ENCODE measurements at regions of chr16 and their contacts with region 1.

Region 1: DNA sequence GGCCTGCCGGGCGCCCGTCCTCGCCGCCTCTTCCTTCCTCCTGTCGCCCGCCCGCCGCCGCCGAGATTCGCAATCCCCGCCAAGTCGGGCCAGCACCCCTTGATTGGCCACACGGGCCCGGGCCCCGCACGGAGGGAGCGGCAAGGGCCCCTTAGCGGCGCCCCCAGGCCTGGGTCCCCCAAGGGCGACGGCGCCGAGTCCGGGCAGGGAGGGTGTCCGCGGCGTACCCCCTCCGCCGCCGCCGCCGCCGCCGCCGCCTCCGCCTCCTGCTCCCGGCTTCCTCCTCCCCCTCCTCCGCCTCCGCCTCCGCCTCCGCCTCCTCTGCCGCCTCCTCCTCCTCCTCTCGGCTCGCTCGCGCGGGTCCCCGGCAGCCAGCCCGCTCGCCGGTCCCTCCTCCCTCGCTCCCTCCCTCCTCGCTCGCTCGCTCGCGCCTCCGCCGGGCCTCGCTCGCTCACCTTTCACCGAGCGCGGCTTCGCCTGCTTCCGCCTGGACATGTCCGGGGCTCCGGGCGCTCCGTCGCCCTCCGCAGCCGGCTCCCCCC is 561 bp downstream of the ZNF423 start:
- DNase-seq: peak in 1 of 2 donors; percentile 89
- H3K4me3 ChIP-seq: peak overlapping the region; percentile 74 to 81
- H3K27ac ChIP-seq: peak overlapping the region; percentile 87 to 92
- H3K4me1 ChIP-seq: peaks cover 0 to 14% of the 10 kb centered on the region in 2 donors
- H3K27me3 ChIP-seq: no peaks in the 10 kb centered on the region
- CTCF ChIP-seq: no peak

Region 2: DNA sequence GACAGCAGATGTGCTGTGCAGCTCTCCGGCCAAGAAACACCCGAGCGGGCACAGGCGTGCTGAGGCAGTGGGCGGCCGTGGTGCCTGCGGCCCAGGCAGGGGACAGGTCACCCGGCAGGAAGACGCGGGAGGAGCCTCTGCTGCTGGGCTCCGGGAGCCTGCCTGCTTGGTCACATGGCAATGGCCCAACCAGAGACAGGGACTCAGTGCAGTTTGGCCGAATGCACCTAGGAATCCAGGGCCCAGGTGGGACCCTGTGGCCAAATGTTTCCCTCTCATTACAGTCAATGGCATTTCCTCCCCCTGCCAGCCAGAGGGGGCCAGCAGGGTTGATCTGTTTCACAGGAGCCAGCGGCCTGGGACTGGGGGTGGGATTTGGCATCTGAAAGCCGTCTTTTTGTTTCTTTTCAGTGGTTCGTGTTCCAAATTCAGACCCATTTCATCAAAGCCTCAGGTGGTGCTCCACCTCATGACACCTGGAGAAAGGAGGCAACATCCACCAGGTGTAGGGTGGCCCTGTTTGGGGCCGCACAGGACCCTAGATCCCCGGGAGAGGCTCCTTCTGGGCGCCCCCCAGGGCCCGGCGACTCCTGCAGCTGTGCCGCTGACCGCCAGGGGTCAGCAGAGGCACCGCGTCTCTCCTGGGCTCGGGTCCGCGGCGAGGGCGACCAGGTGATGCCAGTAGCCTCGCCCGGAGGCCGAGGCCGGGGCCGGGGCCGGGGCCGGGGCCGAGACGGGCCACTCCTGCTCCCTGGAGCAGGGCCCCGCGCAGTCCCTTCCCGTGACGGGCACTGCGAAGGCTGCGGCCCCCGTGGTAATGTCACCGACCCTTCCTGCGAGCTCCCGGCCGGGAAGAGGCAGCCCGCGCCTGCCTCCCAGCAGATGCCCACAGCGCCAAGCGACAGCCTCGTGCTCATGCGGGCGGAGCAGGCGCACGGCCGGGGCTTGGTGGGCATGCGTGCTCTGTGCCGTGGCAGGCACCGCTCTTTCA is 363.3 kb before region 1 on chr16:
- intact Hi-C with region 1: loop called (anchors 5 kb)
- DNase-seq: peak in 1 of 2 donors; percentile 65
- H3K4me3 ChIP-seq: peak overlapping the region; percentile 42 to 62
- H3K27ac ChIP-seq: no peak overlapping the region
- H3K4me1 ChIP-seq: peaks cover 4% of the 10 kb centered on the region in 2 donors
- H3K27me3 ChIP-seq: no peaks in the 10 kb centered on the region
- CTCF ChIP-seq: peak; percentile 82 to 96 (median 95)

Region 3: DNA sequence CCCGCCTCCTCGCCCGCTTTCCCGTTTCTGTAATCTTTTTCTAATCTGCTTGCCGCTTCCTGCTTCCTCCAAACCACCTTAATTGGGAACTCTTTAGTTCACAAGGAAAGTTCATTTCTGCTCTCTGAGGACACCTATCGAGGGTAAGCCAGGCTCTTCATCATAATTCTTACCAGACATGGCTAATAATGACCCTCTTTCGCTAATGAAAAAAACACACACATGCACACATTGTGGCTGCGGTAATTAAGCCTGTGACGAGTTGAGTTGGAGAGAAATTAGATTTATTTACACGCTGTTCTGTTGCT is 100.1 kb before region 1 on chr16:
- intact Hi-C with region 1: loop called (anchors 2 kb)
- DNase-seq: no peak
- H3K4me3 ChIP-seq: peak overlapping the region; percentile 38 to 66
- H3K27ac ChIP-seq: no peak overlapping the region
- H3K4me1 ChIP-seq: peaks cover 0 to 5% of the 10 kb centered on the region in 2 donors
- H3K27me3 ChIP-seq: no peaks in the 10 kb centered on the region
- CTCF ChIP-seq: peak; percentile 12 to 66 (median 45)

Region 4: GRCh38 chr16:49827805-49828438 is 27.4 kb before region 1 on chr16:
- intact Hi-C with region 1: loop called (anchors 1 kb)
- DNase-seq: peak in 1 of 2 donors; percentile 85
- H3K4me3 ChIP-seq: peak overlapping the region in 1 of 2 donors; percentile 23
- H3K27ac ChIP-seq: peak overlapping the region; percentile 80 to 83
- H3K4me1 ChIP-seq: peaks cover 16 to 39% of the 10 kb centered on the region in 2 donors
- H3K27me3 ChIP-seq: no peaks in the 10 kb centered on the region
- CTCF ChIP-seq: no peak

Region 5: GRCh38 chr16:50024684-50025536 is 169.6 kb after region 1 on chr16 and contains the start of gene CNEP1R1:
- intact Hi-C with region 1: loop called (anchors 5 kb)
- DNase-seq: peak; percentile 81 to 97
- H3K4me3 ChIP-seq: peak within 1 kb of the TSS; percentile 85 to 92
- H3K27ac ChIP-seq: peak within 1 kb of the TSS; percentile 71 to 86
- H3K4me1 ChIP-seq: peaks cover 2 to 7% of the 10 kb centered on the region in 2 donors
- H3K27me3 ChIP-seq: no peaks in the 10 kb centered on the region
- CTCF ChIP-seq: peak; percentile 99 to 100 (median 100)
- total RNA-seq, gene CNEP1R1: 5.9 TPM

Region 6: GRCh38 chr16:50806099-50807062 is 951.0 kb after region 1 on chr16:
- intact Hi-C with region 1: loop called (anchors 10 kb)
- DNase-seq: peak; percentile 49 to 94
- H3K4me3 ChIP-seq: peak overlapping the region; percentile 34 to 52
- H3K27ac ChIP-seq: peak overlapping the region; percentile 5 to 61
- H3K4me1 ChIP-seq: peaks cover 0 to 4% of the 10 kb centered on the region in 2 donors
- H3K27me3 ChIP-seq: no peaks in the 10 kb centered on the region
- CTCF ChIP-seq: peak; percentile 80 to 94 (median 86)

Region 7: DNA sequence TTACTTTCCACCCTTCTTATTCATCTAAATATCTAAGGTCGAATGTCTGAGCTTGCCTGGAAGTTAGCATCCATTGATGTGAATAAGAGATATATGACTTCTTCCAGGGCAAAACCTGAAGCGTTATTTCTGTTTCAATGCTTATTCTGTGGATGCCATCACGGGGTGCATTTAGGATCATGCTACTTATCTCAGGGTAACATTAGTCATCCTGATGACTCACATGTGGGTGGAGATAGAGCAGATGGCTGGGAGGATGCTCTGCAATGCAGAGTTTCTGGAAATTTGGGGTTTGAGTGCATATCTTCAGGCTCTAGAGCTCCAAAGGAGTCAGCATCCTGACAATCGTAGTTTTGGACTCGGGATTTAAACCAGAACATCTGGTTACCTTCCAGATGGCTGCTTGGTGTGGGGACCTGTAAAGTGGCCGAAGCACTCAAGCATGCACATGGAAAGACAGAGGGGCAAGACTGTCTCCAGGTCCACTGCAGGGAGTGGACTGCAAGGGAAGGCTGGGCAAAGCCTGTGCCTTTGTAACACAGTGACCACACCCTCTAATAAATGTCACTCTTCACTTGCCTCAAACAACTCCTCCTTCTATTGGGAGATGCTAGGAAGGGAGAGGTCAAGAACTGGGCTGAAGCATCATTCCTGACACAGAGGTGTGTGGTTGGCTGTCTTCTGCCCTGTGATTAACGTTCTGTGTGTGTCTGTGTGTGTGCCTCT is 1470.9 kb after region 1 on chr16:
- intact Hi-C with region 1: no loop called
- DNase-seq: no peak
- H3K4me3 ChIP-seq: no peak overlapping the region
- H3K27ac ChIP-seq: no peak overlapping the region
- H3K4me1 ChIP-seq: no peaks in the 10 kb centered on the region
- H3K27me3 ChIP-seq: no peaks in the 10 kb centered on the region
- CTCF ChIP-seq: no peak

Measured in ascending aorta (tissue), 2 donors.